PC-3 (cell line): ENCODE measurements at regions of chr4 and their contacts with region 1.

Region 1: DNA sequence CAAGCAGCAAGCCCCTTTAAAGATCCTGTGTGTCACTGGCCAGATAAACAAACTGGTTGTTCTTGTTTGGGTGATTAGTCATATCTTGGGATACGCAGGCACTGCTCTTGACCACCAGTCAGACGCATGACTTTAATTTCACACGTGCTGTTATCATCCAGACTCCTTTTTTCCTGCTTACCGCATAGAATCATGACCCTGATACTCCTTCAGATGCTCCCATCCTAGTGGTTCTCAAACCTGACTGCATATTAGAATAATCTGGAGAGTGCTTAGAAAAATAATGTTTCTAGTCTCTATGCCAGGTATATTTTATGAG is 78.8 kb downstream of the CLDN22 start:
- DNase-seq: peak; percentile 86
- ATAC-seq: peak; percentile 88
- H3K4me3 ChIP-seq: no peak overlapping the region
- H3K27ac ChIP-seq: peak overlapping the region; percentile 60
- H3K4me1 ChIP-seq: peaks cover 35% of the 10 kb centered on the region
- H3K27me3 ChIP-seq: no peaks in the 10 kb centered on the region
- CTCF ChIP-seq: no peak

Region 2: GRCh38 chr4:183099537-183100297 is 141.6 kb before region 1 on chr4:
- CTCF ChIA-PET with region 1: interaction called, 3 read pairs
- POLR2A ChIA-PET with region 1: no interaction called
- intact Hi-C with region 1: loop called (anchors 5 kb)
- DNase-seq: peak; percentile 31
- ATAC-seq: peak; percentile 9
- H3K4me3 ChIP-seq: peak overlapping the region; percentile 93
- H3K27ac ChIP-seq: no peak overlapping the region
- H3K4me1 ChIP-seq: peaks cover 20% of the 10 kb centered on the region
- H3K27me3 ChIP-seq: no peaks in the 10 kb centered on the region
- CTCF ChIP-seq: no peak

Region 3: DNA sequence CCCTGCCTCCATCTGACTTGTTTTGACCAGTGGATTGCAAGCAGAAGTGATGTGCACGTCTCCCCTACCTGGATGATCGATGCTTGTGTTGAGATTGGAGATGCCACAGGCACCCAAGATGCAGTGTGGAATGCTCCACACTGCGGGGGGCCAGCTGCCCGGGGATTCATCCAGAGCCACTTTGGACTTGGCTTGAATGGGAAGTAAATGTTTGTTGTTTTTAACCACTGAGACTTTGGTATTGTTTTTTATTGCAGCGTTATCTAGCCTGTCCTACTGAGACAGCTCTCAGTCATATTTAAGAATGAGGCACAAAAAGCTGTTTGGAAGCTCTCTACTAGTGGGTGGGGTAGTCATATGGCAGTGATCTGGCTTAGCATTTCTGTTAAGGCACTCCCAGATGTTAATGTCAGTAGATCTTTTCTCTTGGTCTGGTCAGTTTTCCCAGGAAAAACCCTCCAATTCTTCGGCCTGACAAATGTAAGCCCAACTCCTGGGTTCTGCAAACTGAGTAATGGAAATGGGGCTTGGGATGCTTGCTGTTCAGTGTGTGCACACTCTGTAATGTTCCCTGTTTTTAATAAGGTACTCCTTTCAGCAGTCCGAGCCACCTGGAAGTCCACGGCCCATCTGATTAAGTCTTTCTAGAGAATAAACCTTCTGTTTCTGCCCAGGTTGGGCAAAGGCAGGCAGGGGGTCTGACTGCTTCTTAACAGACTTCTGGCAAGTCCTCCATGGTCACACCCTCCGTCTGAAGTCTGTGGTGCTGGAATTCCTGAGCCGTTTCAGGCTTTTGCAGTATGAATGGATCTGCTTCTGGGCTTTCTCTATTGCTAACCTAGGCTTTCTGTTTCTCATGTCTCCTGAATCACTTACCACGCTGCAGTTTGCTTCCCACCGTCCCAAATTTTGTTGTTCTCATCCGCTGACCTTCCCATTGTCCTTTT is 67.4 kb before region 1 on chr4:
- CTCF ChIA-PET with region 1: no interaction called
- POLR2A ChIA-PET with region 1: no interaction called
- intact Hi-C with region 1: loop called (anchors 5 kb)
- DNase-seq: no peak
- ATAC-seq: no peak
- H3K4me3 ChIP-seq: no peak overlapping the region
- H3K27ac ChIP-seq: no peak overlapping the region
- H3K4me1 ChIP-seq: peaks cover 53% of the 10 kb centered on the region
- H3K27me3 ChIP-seq: no peaks in the 10 kb centered on the region
- CTCF ChIP-seq: no peak

Region 4: DNA sequence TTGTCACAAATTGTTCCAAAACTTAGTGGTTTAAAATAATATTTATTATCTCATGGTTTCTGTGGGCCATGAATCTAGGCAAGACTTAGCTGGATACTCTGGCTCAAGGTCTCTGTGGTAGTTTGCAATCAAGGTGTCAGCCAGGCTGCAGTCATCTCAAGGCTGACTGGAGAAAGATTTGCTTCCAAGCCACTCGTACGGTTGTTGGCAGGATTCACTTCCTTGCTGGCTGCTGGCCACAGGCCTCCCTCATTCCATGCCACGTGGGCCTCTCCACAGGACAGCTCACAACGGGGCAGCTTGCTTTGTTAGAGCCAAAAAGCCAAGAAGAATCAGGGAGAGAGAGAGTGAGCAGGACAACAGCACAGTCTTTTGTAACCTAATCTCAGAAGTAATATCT is 40.8 kb before region 1 on chr4:
- CTCF ChIA-PET with region 1: no interaction called
- POLR2A ChIA-PET with region 1: no interaction called
- intact Hi-C with region 1: loop called (anchors 5 kb)
- DNase-seq: peak; percentile 91
- ATAC-seq: peak; percentile 79
- H3K4me3 ChIP-seq: no peak overlapping the region
- H3K27ac ChIP-seq: peak overlapping the region; percentile 79
- H3K4me1 ChIP-seq: peaks cover 31% of the 10 kb centered on the region
- H3K27me3 ChIP-seq: no peaks in the 10 kb centered on the region
- CTCF ChIP-seq: no peak

Region 5: DNA sequence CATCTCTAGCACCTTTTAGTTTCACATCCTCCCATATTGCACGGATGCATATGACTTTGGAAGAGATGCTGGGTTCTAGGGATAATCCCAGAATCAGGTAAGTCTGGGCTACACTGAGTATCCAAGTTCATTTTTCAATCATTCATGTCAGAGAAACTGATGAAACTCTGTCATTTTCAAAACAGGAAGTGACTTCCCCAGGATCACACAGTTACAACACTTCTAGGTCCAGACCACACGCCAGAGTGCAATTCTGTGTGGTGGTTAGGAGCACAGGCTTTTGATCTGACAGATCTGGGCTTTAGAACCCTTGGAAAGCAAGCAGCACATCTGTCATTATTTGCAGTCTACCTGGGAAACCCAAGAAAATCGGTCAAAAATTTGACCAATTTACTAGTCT is 151.1 kb after region 1 on chr4:
- CTCF ChIA-PET with region 1: no interaction called
- POLR2A ChIA-PET with region 1: no interaction called
- intact Hi-C with region 1: no loop called
- DNase-seq: no peak
- ATAC-seq: no peak
- H3K4me3 ChIP-seq: no peak overlapping the region
- H3K27ac ChIP-seq: no peak overlapping the region
- H3K4me1 ChIP-seq: no peaks in the 10 kb centered on the region
- H3K27me3 ChIP-seq: no peaks in the 10 kb centered on the region
- CTCF ChIP-seq: no peak